K562 (cell line): ENCODE measurements at regions of chr9 and their contacts with region 1.

Region 1: GRCh38 chr9:87725900-87726709 is at the start of gene CTSL:
- DNase-seq: peak; percentile 86 to 90 (median 88)
- ATAC-seq: peak; percentile 96
- H3K4me3 ChIP-seq: peak within 1 kb of the TSS; percentile 55
- H3K27ac ChIP-seq: peak within 1 kb of the TSS; percentile 82
- H3K4me1 ChIP-seq: peaks cover 15 to 18% of the 10 kb centered on the region in 2 experiments; a peak in 4 of 5 replicates
- H3K27me3 ChIP-seq: no peaks in the 10 kb centered on the region
- CTCF ChIP-seq: peak; percentile 47 to 81 (median 59); a peak in 5 of 6 replicates
- EP300 ChIP-seq: no peak
- POLR2A ChIP-seq: peak; percentile 88
- RAD21 ChIP-seq: peak; percentile 47 to 65
- polyA plus RNA-seq, gene CTSL: 55.9 to 61.8 TPM

Region 2: DNA sequence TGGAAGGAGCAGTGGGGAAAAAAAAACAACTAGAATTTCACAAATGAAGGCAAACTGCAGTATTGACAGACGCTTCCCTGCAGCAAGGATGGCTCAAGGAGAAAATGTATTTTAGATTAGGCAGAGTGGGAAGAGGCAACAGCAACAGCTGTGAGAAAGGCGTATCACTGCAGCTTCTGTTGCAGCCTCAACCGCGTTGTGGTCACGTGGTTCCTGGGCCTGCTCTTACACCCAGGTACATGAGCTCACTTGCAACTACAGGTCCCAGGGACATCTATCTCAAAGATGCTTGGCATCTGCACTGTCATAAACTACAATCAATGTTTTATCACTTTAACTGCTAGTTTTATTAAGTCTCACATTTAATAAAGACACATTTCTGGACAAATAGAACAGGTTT is 1590.7 kb before region 1 on chr9:
- CTCF ChIA-PET with region 1: no interaction called
- POLR2A ChIA-PET with region 1: no interaction called
- in situ Hi-C with region 1: no loop called
- intact Hi-C with region 1: no loop called
- DNase-seq: no peak
- ATAC-seq: no peak
- H3K4me3 ChIP-seq: no peak overlapping the region
- H3K27ac ChIP-seq: no peak overlapping the region
- H3K4me1 ChIP-seq: no peaks in the 10 kb centered on the region
- H3K27me3 ChIP-seq: no peaks in the 10 kb centered on the region
- CTCF ChIP-seq: no peak
- EP300 ChIP-seq: no peak
- POLR2A ChIP-seq: no peak
- RAD21 ChIP-seq: no peak

Region 3: DNA sequence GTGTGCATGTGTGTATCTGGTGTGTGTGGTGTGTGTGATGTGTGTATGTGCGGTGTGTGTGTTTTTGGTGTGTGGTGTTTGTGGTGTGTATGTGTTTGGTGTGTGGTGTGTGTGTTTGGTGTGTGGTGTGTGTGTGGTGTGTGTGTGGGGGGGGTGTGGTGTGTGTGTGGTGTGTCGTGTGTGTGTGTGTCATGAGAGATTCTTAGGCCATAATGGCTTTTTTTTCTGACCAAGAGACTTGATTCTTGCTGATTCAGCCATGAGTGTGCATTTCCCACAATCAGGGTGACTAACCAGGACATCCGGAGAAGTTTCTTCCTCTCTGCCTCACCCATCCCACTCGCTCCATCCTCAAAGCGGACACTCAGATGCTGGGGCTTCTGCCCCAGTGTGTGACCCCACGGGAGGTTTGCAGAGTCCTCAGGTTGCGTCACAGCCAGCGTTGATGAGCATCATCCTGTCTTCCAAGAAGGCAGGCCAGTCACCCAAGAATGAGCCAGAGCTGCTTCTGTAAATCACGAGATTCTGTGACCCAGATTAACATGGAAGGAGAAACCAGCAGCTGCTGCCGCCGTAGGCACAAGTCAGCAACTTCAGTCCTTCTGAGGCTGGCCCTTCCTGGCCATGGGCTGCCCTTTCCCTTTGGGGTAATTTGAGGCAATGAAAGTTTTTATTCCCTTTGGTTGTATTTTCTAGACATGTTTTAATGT is 12.7 kb before region 1 on chr9:
- CTCF ChIA-PET with region 1: no interaction called
- POLR2A ChIA-PET with region 1: interaction called, 22 read pairs
- in situ Hi-C with region 1: no loop called
- intact Hi-C with region 1: no loop called
- DNase-seq: peak; percentile 47 to 89 (median 63)
- ATAC-seq: peak; percentile 83
- H3K4me3 ChIP-seq: no peak overlapping the region
- H3K27ac ChIP-seq: peak overlapping the region; percentile 95
- H3K4me1 ChIP-seq: peaks cover 21 to 49% of the 10 kb centered on the region in 2 experiments; a peak in 4 of 5 replicates
- H3K27me3 ChIP-seq: no peaks in the 10 kb centered on the region
- CTCF ChIP-seq: peak in 2 of 3 experiments; percentile 7 to 15; a peak in 2 of 6 replicates
- EP300 ChIP-seq: peak; percentile 78
- POLR2A ChIP-seq: no peak
- RAD21 ChIP-seq: no peak; a peak in 1 of 4 replicates

Region 4: DNA sequence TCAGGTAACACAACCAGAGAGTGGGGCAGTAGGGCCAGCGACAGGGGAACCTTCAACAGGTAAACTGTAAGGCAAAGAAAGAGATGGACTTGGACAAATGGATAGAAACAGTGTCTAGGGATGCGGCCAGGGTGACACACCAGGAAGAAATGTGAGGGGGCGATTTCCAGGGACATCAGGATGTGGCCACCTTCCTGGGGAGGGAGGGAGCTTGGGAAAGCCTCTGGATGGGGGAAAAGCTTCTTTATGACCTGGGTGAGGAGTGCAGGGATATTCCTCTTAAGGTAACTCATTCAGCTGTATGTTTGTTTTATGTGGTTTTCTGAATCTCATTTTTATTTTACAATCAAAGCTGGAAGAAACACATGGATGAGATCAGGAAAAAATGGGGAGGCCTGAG is 797.0 kb after region 1 on chr9:
- CTCF ChIA-PET with region 1: no interaction called
- POLR2A ChIA-PET with region 1: no interaction called
- in situ Hi-C with region 1: no loop called
- intact Hi-C with region 1: no loop called
- DNase-seq: no peak
- ATAC-seq: no peak
- H3K4me3 ChIP-seq: no peak overlapping the region
- H3K27ac ChIP-seq: no peak overlapping the region
- H3K4me1 ChIP-seq: no peaks in the 10 kb centered on the region
- H3K27me3 ChIP-seq: peaks cover 0 to 10% of the 10 kb centered on the region in 2 experiments; a peak in 2 of 5 replicates
- CTCF ChIP-seq: no peak
- EP300 ChIP-seq: no peak
- POLR2A ChIP-seq: no peak
- RAD21 ChIP-seq: no peak